CD14-positive monocyte (primary cell): ENCODE measurements at regions of chr2 and their contacts with region 1.

Region 1: DNA sequence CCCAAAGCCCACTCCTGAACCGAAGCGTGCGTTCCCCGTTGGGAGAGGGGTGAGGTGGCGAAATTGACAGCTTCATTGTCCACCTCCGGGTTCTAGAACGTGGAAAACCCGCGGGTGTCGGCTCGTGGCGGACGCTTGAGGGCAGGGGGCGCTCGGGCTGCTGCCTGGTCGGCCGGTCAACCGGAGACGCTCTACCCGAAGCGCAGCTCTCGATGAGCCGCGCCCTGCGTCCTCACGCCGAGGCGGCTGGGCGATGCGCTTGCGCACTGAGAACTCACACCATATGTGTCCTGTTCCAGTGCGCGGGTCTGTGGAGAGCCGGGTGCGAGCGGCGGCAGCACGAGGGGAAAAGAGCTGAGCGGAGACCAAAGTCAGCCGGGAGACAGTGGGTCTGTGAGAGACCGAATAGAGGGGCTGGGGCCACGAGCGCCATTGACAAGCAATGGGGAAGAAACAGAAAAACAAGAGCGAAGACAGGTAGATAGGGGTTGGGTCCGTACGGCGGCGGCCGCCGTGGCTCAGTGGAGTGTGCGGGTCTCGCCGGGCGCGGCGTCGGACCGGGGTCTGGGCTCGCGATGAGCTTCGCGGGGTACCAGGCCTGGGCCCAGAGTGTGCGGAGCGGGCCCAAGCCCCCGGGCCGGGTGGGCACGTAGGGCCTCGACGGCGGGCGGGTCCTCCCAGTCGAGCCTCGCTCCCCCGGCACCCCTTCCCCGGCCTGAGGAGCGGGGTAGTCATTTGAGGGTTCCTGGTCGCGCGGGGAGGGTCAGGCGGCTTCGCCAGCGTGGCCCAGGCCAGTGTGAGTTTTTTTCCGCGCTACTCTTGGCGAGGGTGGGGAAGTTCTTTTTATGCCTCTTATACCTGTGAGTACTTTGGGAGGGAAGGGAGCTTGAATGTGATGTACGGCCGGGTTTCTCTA is at the start of gene EIF5B:
- DNase-seq: peak; percentile 91 to 97 (median 93)
- H3K4me3 ChIP-seq: peak within 1 kb of the TSS; percentile 68 to 94 (median 94)
- H3K4me3 Mint-ChIP-seq: no peak within 1 kb of the TSS
- H3K27ac ChIP-seq: peak within 1 kb of the TSS; percentile 84 to 94
- H3K27ac Mint-ChIP-seq: no peak within 1 kb of the TSS
- H3K4me1 ChIP-seq: peaks cover 18 to 34% of the 10 kb centered on the region in 2 donors
- H3K4me1 Mint-ChIP-seq: peaks cover 21% of the 10 kb centered on the region
- H3K27me3 ChIP-seq: no peaks in the 10 kb centered on the region
- H3K27me3 Mint-ChIP-seq: no peaks in the 10 kb centered on the region
- CTCF ChIP-seq: peak; percentile 78
- polyA plus RNA-seq, gene EIF5B: 0.58 to 3.2 (median 1.5) TPM

Region 2: DNA sequence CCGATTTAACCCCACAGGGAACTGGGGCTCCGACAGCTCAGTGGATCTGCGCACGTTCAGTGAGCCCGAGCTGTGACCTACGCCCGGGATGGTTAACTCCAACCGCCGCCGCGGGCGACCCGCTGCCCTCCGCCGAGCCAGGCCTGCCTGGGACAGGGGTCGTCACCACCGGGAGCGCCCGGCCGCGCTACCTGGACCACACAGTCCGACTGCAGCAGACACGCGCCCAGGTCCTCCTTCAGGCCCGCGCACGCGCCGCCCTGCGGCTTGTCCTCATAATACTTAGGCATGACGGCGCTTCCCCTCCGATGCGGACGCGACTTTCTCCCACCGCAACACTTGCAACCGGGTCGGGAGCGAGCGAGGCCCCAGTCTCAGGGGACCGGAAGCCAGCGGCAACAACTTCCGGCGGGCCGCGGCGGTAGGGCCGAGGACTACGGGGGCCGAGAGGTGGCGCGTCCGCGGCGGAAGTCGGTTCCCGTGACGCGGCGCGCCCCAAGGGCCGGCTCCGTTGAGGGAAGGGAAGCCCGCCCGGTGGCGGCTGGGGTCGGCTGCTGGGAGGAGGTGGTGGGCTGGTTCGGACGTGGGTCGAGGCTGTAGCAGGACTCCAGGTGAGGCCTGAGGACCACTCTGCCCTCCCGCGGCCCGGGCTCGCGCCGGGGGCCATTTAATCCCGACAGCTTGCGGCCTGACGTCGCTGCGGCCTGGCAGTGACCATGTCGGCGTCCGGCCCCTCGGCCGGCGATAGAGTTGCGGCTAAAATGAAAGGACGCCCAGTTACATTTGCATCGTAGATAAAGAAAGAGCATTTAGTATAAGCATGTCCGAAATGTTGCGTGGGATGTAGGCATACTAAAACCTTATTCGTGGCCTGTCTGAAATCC is 729.0 kb before region 1 on chr2 and contains the starts of genes COA5 and UNC50:
- intact Hi-C with region 1: loop called (anchors 5 to 10 kb)
- DNase-seq: peak; percentile 90 to 96 (median 94)
- H3K4me3 ChIP-seq: peak within 1 kb of the TSS; percentile 70 to 95 (median 95)
- H3K4me3 Mint-ChIP-seq: peak within 1 kb of the TSS; percentile 81 to 98
- H3K27ac ChIP-seq: peak within 1 kb of the TSS; percentile 79 to 99
- H3K27ac Mint-ChIP-seq: peak within 1 kb of the TSS; percentile 94 to 98 (median 96)
- H3K4me1 ChIP-seq: peaks cover 31 to 33% of the 10 kb centered on the region in 2 donors
- H3K4me1 Mint-ChIP-seq: peaks cover 47% of the 10 kb centered on the region
- H3K27me3 ChIP-seq: no peaks in the 10 kb centered on the region
- H3K27me3 Mint-ChIP-seq: no peaks in the 10 kb centered on the region
- CTCF ChIP-seq: no peak
- polyA plus RNA-seq, gene COA5: 27.3 to 42.9 (median 39.0) TPM
- polyA plus RNA-seq, gene UNC50: 32.5 to 72.0 (median 62.8) TPM

Region 3: DNA sequence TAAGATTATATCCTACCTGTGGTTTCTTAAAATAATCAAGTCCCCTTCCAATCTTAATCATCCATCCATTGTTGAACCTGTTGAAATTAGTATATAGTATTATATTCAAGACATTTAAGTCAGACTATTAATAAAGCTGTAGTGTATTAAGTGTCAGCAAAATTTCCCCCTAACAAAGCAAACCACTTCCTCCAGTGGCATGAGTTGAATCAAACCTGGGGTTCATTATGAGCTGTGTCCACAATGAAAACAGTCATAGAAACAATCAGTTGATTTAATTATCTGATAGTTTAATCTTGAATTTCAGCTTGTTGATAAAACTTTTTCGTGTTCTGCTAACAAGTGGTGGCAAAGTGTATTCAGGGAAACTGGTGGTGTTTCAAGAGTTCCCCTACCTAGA is 167.8 kb before region 1 on chr2:
- intact Hi-C with region 1: no loop called
- DNase-seq: no peak
- H3K4me3 ChIP-seq: no peak overlapping the region
- H3K4me3 Mint-ChIP-seq: no peak overlapping the region
- H3K27ac ChIP-seq: no peak overlapping the region
- H3K27ac Mint-ChIP-seq: no peak overlapping the region
- H3K4me1 ChIP-seq: no peaks in the 10 kb centered on the region
- H3K4me1 Mint-ChIP-seq: no peaks in the 10 kb centered on the region
- H3K27me3 ChIP-seq: no peaks in the 10 kb centered on the region
- H3K27me3 Mint-ChIP-seq: no peaks in the 10 kb centered on the region
- CTCF ChIP-seq: no peak

Region 4: GRCh38 chr2:99442837-99443236 is 105.5 kb after region 1 on chr2:
- intact Hi-C with region 1: no loop called
- DNase-seq: peak in 2 of 3 donors; percentile 6 to 7
- H3K4me3 ChIP-seq: no peak overlapping the region
- H3K4me3 Mint-ChIP-seq: no peak overlapping the region
- H3K27ac ChIP-seq: no peak overlapping the region
- H3K27ac Mint-ChIP-seq: no peak overlapping the region
- H3K4me1 ChIP-seq: no peaks in the 10 kb centered on the region
- H3K4me1 Mint-ChIP-seq: no peaks in the 10 kb centered on the region
- H3K27me3 ChIP-seq: no peaks in the 10 kb centered on the region
- H3K27me3 Mint-ChIP-seq: peaks cover 0 to 1% (median 0%) of the 10 kb centered on the region in 3 donors
- CTCF ChIP-seq: peak; percentile 14

Region 5: DNA sequence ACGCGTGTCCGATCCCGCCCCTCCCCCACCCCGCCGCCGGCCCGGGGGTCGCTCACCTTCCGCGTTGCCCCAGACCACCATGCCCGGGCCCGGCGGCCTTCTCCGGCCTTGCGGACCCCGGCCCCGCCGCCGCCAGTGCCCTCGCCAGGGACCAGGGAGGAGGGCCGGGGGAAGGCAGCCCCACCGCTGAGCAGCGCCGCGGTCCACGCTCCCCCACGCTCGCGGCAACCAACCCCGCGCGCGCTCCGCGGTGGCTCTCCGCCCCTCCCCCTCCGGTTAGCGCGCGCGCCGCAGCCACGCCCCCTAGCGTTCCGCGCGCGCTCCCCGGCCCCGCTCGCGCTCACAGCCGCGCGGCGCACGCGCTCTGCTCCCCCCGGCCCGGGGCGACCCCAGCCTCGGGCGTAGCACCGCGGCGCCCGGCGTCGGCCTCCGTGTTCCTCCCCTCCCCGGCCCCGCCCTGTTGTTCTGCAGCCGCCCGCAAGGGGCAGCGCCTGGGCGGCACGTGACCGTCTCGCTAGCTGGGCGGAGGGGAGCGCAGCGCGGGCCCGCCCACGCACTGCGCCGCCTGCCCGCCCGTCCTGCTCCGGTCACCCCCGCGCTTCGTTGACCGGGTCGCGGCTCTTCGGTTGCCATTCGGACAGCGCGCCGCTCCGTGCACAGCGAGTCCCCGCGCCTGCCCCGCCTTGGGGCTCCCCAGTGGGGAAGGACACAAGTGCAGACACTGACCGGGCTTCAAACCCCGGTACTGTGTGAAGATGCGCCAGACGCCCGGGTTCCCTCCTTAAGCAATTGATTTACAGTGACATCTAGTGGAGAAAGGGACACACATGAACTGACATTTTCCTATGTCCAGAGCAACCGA is 152.6 kb after region 1 on chr2 and contains the start of gene REV1:
- intact Hi-C with region 1: loop called (anchors 2 kb)
- DNase-seq: peak; percentile 90 to 94 (median 93)
- H3K4me3 ChIP-seq: peak within 1 kb of the TSS; percentile 66 to 97 (median 95)
- H3K4me3 Mint-ChIP-seq: peak within 1 kb of the TSS; percentile 98 to 99
- H3K27ac ChIP-seq: peak within 1 kb of the TSS; percentile 82 to 94
- H3K27ac Mint-ChIP-seq: peak within 1 kb of the TSS; percentile 98 to 99 (median 98)
- H3K4me1 ChIP-seq: peaks cover 19 to 26% of the 10 kb centered on the region in 2 donors
- H3K4me1 Mint-ChIP-seq: peaks cover 29% of the 10 kb centered on the region
- H3K27me3 ChIP-seq: no peaks in the 10 kb centered on the region
- H3K27me3 Mint-ChIP-seq: peaks cover 0 to 7% (median 2%) of the 10 kb centered on the region in 3 donors
- CTCF ChIP-seq: peak; percentile 86
- polyA plus RNA-seq, gene REV1: 6.5 to 39.9 (median 9.5) TPM